ENCODE measurements at regions of chr2 and their contacts with region 1.

Region 1: DNA sequence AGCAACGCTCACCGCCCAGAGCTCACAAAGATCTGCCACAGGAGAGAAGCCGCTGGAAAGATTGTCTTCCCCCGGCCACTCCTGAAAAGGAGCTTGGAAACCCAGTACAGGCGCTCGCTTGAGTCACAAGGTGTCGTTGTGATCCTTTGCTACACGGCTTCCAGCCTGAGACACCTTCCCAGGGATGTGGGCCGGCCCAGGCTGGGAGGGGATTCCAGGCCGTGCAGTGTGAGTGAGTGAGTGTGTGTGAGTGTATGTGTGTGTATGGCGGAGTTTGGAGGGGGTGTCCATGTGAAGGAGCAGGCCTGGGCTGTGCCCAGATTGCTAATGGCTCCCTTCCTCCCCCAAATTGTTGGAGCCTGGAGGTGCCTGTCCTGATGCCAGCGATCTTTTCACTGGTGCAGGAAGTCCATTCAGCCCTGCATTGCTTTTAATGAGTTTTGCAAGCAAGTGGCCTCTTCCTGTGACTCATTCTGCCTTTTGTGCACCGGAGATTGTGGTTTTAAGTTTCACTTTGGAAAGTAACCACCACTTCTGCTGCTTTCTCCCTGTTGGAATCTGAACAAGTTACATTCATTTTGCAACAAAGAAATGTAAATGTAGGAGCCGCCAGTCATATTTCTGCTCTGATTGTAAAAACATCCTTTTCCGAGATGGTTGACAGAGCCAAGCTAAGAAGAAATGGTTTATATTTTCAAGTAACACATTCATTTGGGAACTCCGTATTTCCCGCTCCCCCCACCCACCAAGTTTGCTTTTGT is 83.7 kb downstream of the LPIN1 start:
- DNase-seq: peak; percentile 86
- H3K4me3 ChIP-seq: no peak overlapping the region; the same call in 1 of the 2 replicates
- H3K27me3 ChIP-seq: no peaks in the 10 kb centered on the region
- CTCF ChIP-seq: peak; percentile 50

Region 2: DNA sequence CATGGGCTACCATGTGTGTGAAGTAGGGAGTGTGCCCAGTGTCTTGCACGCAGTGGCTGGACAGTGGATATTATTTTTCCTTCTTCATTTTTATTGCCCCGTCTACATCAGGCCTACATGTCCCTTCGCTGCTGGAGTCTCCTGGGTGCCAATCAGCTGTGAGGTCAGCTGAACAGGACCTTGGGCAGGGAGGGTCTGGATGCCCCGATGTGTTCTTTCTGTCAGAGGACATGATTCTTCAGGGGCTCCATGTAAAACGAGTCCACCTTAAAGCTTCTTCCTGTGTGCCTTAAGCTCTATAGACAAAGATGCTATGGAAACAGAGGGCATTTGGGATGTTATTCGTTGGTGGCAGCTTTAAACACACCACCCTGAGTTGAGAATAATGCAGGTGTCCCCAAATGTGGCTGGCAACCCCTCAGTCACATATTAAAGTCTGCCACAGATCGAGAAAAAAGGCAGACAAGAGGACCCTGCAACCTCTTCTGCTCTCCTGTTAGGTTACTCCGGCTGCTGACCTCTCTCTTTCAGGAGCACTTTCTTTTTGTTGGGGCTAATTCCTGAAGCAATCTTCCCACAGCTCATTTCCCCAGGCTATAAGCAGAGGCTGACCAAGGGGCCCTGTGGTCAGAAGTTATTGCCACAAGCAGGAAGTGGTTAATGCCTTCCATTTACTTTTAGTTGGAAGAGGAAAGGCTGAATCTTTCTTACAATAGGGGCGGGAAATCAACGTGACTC is 276.3 kb before region 1 on chr2:
- CTCF ChIA-PET with region 1: no interaction called
- POLR2A ChIA-PET with region 1: no interaction called
- DNase-seq: no peak
- H3K4me3 ChIP-seq: no peak overlapping the region
- H3K27me3 ChIP-seq: peaks cover 17% of the 10 kb centered on the region
- CTCF ChIP-seq: no peak

Region 3: DNA sequence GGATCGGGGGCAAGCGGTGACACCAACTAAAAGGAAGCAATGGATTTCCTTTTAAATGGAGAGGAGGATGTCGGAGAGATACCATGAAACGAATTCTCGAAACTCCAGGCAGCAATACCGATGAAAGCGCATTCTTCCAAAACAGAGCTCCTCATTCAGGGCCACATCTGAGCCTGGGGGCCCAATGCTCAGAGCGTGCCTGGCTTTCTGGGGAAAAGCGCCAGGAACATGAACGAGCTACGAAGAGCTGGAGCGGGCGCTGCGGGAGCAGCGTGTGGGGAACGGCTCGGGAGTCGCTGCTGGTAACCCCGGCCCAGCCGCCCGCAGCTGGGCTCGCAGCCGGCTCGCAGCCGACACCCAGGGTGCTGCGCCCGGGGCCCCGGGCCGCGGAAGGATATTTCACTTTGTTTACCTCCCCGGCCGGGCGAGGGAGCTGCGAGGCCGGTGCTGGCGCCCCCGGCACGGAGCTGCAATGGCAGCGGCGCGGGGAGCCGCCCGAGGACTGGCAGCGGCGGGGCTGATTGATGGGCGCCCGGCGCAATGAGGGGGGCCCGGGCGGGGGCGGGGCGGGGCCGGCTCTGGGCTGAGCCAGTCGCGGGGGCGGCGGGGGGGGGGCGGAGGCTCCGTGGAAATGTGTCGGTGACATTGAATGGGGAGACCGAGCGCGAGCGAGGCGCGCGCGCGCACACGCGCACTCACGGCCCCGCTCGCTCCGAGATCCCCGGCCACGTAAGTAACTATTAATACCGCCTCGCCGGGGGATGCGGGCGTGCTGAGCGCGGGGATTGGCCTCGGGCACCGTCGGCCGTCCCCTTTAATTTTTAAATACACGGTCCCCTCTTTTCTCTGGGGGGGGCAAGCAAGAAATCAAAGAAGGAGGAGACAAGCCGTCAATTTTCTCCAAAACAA is 886.4 kb after region 1 on chr2 and contains the start of gene TRIB2:
- CTCF ChIA-PET with region 1: interaction called, 11 read pairs
- POLR2A ChIA-PET with region 1: no interaction called
- DNase-seq: no peak
- H3K4me3 ChIP-seq: peak within 1 kb of the TSS; percentile 77
- H3K27me3 ChIP-seq: no peaks in the 10 kb centered on the region
- CTCF ChIP-seq: no peak
- polyA plus RNA-seq, gene TRIB2: 11.0 and 12.5 TPM in 2 replicates